ENCODE measurements at regions of chr11 and their contacts with region 1.

Region 1: GRCh38 chr11:96073536-96073935 is 149.6 kb upstream of the MTMR2 start:
- DNase-seq: no peak
- ATAC-seq: no peak
- H3K4me3 ChIP-seq: no peak overlapping the region
- H3K4me3 Mint-ChIP-seq: no peak overlapping the region
- H3K27ac ChIP-seq: no peak overlapping the region
- H3K27ac Mint-ChIP-seq: peak overlapping the region in 1 of 9 donors; percentile 32
- H3K4me1 ChIP-seq: peaks cover 0 to 13% of the 10 kb centered on the region in 2 donors
- H3K4me1 Mint-ChIP-seq: peaks cover 30 to 72% (median 53%) of the 10 kb centered on the region in 7 donors
- H3K27me3 ChIP-seq: no peaks in the 10 kb centered on the region
- H3K27me3 Mint-ChIP-seq: no peaks in the 10 kb centered on the region

Region 2: GRCh38 chr11:96026310-96026709 is 47.2 kb before region 1 on chr11:
- CTCF ChIA-PET with region 1: no interaction called
- POLR2A ChIA-PET with region 1: no interaction called
- intact Hi-C with region 1: no loop called
- DNase-seq: no peak
- ATAC-seq: no peak
- H3K4me3 ChIP-seq: no peak overlapping the region
- H3K4me3 Mint-ChIP-seq: no peak overlapping the region
- H3K27ac ChIP-seq: no peak overlapping the region
- H3K27ac Mint-ChIP-seq: peak overlapping the region in 8 of 9 donors; percentile 45 to 80 (median 72)
- H3K4me1 ChIP-seq: peaks cover 0 to 17% of the 10 kb centered on the region in 2 donors
- H3K4me1 Mint-ChIP-seq: peaks cover 22 to 92% (median 85%) of the 10 kb centered on the region in 7 donors
- H3K27me3 ChIP-seq: no peaks in the 10 kb centered on the region
- H3K27me3 Mint-ChIP-seq: no peaks in the 10 kb centered on the region

Region 3: GRCh38 chr11:96054870-96055705 is 18.4 kb before region 1 on chr11:
- CTCF ChIA-PET with region 1: interaction called, 5 read pairs
- POLR2A ChIA-PET with region 1: no interaction called
- intact Hi-C with region 1: loop called in 1 of 2 experiments (anchors 2 kb)
- DNase-seq: peak in 5 of 9 donors; percentile 15 to 41 (median 29)
- ATAC-seq: peak; percentile 72
- H3K4me3 ChIP-seq: no peak overlapping the region
- H3K4me3 Mint-ChIP-seq: peak overlapping the region in 4 of 10 donors; percentile 4 to 63 (median 32)
- H3K27ac ChIP-seq: no peak overlapping the region
- H3K27ac Mint-ChIP-seq: peak overlapping the region in 8 of 9 donors; percentile 15 to 88 (median 70)
- H3K4me1 ChIP-seq: peaks cover 0 to 16% of the 10 kb centered on the region in 2 donors
- H3K4me1 Mint-ChIP-seq: peaks cover 18 to 89% (median 77%) of the 10 kb centered on the region in 7 donors
- H3K27me3 ChIP-seq: no peaks in the 10 kb centered on the region
- H3K27me3 Mint-ChIP-seq: no peaks in the 10 kb centered on the region

Region 4: GRCh38 chr11:96084610-96085318 is 11.2 kb after region 1 on chr11:
- CTCF ChIA-PET with region 1: interaction called, 3 read pairs
- POLR2A ChIA-PET with region 1: no interaction called
- intact Hi-C with region 1: loop called in 1 of 2 experiments (anchors 2 kb)
- DNase-seq: no peak
- ATAC-seq: no peak
- H3K4me3 ChIP-seq: no peak overlapping the region
- H3K4me3 Mint-ChIP-seq: peak overlapping the region in 1 of 10 donors; percentile 0
- H3K27ac ChIP-seq: no peak overlapping the region
- H3K27ac Mint-ChIP-seq: peak overlapping the region in 4 of 9 donors; percentile 48 to 74 (median 58)
- H3K4me1 ChIP-seq: peaks cover 0 to 11% of the 10 kb centered on the region in 2 donors
- H3K4me1 Mint-ChIP-seq: peaks cover 11 to 51% (median 23%) of the 10 kb centered on the region in 7 donors
- H3K27me3 ChIP-seq: no peaks in the 10 kb centered on the region
- H3K27me3 Mint-ChIP-seq: no peaks in the 10 kb centered on the region

Measured in naive thymus-derived CD4-positive, alpha-beta T cell (primary cell).